GM10248 (cell line): ENCODE measurements at regions of chr1 and their contacts with region 1.

Region 1: GRCh38 chr1:180252638-180253536 is 22.8 kb downstream of the LHX4 start:
- DNase-seq: peak; percentile 84
- CTCF ChIP-seq: peak; percentile 97

Region 2: DNA sequence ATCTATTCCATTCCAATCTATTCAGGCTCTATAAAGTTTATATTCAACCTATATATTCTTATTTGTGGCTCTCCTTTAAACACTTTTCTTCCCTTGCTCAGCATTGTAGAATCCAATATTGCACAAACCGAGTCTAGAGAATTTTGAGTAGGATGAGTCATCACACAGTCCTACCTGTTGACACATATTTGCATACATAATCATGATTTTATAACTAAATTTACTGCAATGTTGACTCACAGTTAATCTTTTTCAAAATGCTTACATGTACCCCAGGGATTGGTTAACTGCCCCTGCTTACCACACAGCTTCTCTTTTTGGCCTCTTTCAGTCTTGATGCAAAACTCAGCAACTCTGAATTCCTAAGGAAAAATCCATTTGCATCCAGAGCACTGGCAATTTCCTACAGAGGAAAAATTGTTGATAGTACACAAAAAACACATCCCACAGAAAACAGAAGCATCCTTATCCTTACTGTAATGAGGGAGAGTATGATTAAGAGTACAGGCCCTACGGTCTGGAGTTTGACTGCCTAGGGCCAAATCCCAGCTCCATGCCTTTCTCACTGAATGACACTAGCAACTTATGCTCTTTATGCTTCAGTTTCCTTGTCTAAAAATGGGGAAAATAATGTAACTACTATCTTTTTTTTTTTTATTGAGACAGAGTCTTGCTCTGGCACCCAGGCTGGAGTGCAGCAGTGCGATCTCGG is 326.2 kb before region 1 on chr1:
- CTCF ChIA-PET with region 1: no interaction called
- POLR2A ChIA-PET with region 1: no interaction called
- DNase-seq: no peak
- CTCF ChIP-seq: no peak

Region 3: GRCh38 chr1:180269761-180270527 is 17.1 kb after region 1 on chr1:
- CTCF ChIA-PET with region 1: interaction called, 12 read pairs
- POLR2A ChIA-PET with region 1: no interaction called
- DNase-seq: no peak
- CTCF ChIP-seq: no peak

Region 4: DNA sequence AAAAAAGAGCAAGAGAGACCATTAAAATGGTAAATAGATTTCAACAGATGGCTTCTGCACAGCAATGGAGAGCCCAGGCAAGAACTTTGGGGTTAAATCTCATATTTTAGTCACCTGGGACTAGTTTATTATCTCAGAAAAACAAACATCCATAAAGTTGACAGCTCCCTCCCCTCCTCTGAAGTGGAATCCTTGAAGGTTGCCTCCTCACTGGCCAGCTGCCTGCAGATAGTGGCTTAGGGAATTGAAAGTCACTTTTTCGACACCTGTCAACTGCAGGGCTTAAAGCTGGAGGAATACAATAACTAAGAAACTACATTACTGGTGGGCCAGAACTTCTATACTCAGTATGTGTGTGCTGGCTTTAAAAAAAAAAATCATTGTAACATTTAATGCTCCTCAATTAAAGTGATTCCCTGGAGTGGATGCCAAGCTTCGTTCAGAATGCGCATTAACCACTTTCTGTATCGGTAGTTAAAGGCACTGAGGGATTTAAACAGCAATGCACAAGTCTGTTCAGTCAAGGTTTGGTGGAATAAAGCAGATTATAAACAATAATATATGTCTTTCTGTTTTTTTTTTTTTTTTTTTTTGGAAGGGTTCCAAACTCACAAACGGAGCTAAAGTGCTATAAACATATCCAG is 29.6 kb after region 1 on chr1:
- CTCF ChIA-PET with region 1: interaction called, 10 read pairs
- POLR2A ChIA-PET with region 1: no interaction called
- DNase-seq: no peak
- CTCF ChIP-seq: no peak